ENCODE measurements at regions of chr18 and their contacts with region 1.

Region 1: GRCh38 chr18:48777026-48777743 is 173.6 kb downstream of the SMAD7 start:
- DNase-seq: peak; percentile 75 to 82 (median 79)
- ATAC-seq: peak; percentile 86
- H3K4me3 ChIP-seq: no peak overlapping the region
- H3K4me1 ChIP-seq: peaks cover 32% of the 10 kb centered on the region
- CTCF ChIP-seq: peak; percentile 89

Region 2: GRCh38 chr18:48928787-48929186 is 151.6 kb after region 1 on chr18:
- intact Hi-C with region 1: loop called in 1 of 2 experiments (anchors 10 kb)
- DNase-seq: peak; percentile 73 to 90 (median 80)
- ATAC-seq: peak; percentile 56
- H3K4me3 ChIP-seq: no peak overlapping the region
- H3K4me1 ChIP-seq: peaks cover 95% of the 10 kb centered on the region
- CTCF ChIP-seq: no peak

Region 3: GRCh38 chr18:49041435-49042245 is 264.5 kb after region 1 on chr18:
- intact Hi-C with region 1: loop called in 1 of 2 experiments (anchors 10 kb)
- DNase-seq: peak in 2 of 3 donors; percentile 54 to 88
- ATAC-seq: peak; percentile 70
- H3K4me3 ChIP-seq: no peak overlapping the region
- H3K4me1 ChIP-seq: no peaks in the 10 kb centered on the region
- CTCF ChIP-seq: peak; percentile 12

Region 4: GRCh38 chr18:49340446-49340845 is 563.3 kb after region 1 on chr18:
- intact Hi-C with region 1: no loop called
- DNase-seq: no peak
- ATAC-seq: no peak
- H3K4me3 ChIP-seq: no peak overlapping the region
- H3K4me1 ChIP-seq: no peaks in the 10 kb centered on the region
- CTCF ChIP-seq: no peak

Measured in mucosa of descending colon (tissue), 3 donors.